AG04449 (cell line): ENCODE measurements at regions of chr9 and their contacts with region 1.

Region 1: GRCh38 chr9:123225374-123225813 is 43.0 kb downstream of the STRBP start:
- DNase-seq: peak; percentile 36
- H3K4me3 ChIP-seq: no peak overlapping the region
- CTCF ChIP-seq: peak; percentile 57

Region 2: DNA sequence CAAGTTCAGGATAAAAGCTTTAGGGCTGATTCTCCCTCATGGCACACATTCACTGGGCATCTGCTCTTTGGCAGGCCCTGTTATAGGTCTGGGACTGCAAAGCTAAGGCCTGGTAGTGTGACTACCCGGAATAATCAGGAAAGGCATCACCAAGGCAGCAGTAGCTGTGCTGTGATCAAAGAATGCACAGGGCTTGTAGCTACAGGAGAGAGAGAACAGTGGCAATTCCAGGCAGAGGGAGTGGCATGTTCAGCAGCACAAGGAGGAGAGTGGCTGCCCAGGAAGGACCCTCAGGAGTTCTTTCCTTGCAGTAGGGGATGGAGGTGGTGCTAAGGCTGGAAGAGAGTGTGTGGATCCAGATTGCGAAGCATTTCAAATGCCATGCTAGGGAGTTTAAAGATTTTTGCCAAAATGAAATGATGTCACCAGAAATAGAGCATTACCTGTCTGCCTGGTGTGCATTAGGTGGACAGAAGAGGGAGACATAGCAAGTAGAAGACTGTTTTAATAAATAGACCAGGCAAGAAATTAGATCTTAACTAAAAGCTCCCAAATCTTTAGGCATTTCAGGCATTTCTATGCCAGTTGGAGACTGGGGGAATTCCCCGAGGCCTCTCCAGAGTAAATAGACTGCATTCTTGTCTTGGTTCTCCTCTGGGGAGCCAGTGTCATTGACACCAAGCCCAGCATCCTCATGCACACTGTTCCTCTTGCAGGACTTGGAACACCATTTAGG is 122.9 kb before region 1 on chr9:
- CTCF ChIA-PET with region 1: interaction called, 11 read pairs
- POLR2A ChIA-PET with region 1: no interaction called
- DNase-seq: peak; percentile 16
- H3K4me3 ChIP-seq: no peak overlapping the region
- CTCF ChIP-seq: peak; percentile 17